Endothelial cell of umbilical vein (primary cell): ENCODE measurements at regions of chr6 and their contacts with region 1.

Region 1: DNA sequence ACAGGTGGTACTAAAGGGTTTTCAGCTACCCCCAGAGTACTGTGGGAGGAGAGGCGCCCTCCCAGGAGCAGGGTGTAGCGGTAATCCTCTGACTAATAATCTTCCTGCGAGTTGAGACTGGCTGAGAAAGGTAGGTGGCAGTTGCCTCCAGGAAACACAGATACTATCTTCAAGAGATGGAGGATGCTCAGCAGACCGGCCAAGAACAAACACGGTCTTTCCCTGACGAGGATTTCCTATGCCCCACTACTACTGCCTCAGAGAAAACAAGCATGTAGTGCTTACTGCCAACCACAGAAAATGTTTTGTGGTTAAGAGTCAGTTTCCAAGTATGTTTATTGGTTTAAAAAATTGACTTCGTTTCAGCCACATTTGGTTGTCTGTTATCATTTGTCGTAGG is 26.8 kb downstream of the C6orf89 start:
- DNase-seq: no peak
- H3K4me3 ChIP-seq: no peak overlapping the region
- H3K27ac ChIP-seq: no peak overlapping the region
- H3K4me1 ChIP-seq: peaks cover 8% of the 10 kb centered on the region
- H3K27me3 ChIP-seq: no peaks in the 10 kb centered on the region
- CTCF ChIP-seq: no peak
- POLR2A ChIP-seq: no peak

Region 2: DNA sequence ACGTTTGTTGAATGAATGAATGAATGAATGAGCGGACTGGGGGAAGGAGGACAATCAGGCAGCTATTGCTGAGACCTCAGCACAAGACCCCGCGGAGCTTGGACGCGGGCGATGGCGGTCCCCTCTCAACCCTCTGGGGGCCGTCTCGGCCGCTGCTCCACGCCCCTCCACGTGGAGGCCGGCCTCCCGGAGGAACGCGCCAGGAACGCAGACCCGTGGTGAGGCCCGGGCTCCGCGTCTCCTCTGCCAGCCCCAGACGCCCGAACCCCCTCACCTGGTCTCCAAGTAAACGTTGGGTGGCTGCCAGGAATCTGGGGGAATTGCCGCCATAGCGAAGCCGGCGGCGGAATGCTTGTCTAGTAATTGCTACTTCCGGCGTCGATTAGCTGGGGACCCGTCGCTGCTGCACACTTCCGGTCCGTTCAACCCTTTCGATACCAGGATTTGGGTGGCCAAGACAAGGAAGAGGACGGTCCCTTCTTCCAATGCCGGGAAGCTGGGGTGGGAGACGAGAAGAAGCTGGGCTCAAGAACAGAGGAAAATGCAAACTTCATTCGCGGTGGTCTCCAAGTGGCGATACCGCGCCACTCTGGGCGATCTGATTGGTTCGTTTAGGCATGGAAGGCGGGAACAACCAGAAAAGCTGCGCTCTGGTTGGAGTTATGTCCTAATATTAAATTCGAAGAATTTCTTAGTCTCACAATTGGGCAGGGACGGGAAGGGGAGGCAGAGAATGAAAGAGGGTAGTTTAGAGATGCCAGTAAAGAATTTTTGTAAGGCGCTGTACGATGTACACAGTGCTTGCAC is 37.9 kb before region 1 on chr6 and contains the start of gene PPIL1:
- CTCF ChIA-PET with region 1: interaction called, 10 read pairs
- POLR2A ChIA-PET with region 1: no interaction called
- dilution Hi-C with region 1: no loop called
- intact Hi-C with region 1: no loop called
- DNase-seq: peak; percentile 93
- H3K4me3 ChIP-seq: peak within 1 kb of the TSS; percentile 63 to 95 (median 67)
- H3K27ac ChIP-seq: peak within 1 kb of the TSS; percentile 82
- H3K4me1 ChIP-seq: peaks cover 12% of the 10 kb centered on the region
- H3K27me3 ChIP-seq: no peaks in the 10 kb centered on the region
- CTCF ChIP-seq: peak in 1 of 2 donors; percentile 2
- POLR2A ChIP-seq: peak; percentile 59
- total RNA-seq, gene PPIL1: 33.8 and 35.6 TPM in 2 replicates

Region 3: DNA sequence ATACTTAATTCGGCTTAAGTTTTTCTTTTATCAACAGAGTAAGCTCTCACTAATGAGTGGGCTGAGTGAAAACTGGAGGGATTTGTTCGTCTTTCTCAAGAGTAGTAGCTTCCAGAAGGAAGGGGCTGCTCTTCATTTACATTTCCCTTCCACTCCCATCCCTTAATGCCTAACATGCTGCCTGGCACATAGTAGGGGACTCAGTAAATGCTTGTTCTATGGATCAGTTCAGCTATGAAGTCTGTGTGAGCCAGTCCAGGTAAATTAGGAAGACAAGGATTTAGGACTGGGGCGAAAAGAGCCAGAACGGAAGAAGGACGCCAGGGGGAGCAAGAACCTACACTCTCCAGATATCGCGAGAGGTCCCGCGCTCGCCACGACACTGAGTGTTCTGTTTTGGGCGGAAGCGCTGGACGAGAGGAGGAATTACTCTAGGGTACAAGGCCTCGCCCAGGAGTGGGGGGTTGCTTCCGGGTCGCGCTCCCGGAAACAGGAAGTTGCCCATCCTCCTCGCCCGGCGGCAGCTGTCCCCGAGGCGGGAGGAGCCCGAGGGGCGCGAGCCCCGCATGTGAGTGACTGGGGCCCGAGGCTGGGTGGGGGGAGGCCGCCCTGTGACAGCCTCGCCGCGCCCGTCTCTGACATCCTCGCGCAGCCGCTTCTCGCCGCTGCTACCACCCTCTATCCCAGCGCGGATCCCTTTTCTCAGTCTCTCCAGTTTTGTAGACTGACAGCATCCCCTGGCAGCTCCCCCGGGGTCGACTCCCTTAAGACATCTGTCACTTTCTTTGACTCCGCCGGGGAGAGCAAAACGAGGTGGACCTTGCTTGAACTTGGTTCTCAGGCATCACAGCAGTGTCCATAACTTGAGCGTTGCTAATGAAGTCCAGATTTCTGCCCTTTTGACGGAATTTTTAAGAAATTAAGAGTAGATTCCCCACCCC is 26.9 kb before region 1 on chr6 and contains the start of gene C6orf89:
- CTCF ChIA-PET with region 1: interaction called, 11 read pairs
- POLR2A ChIA-PET with region 1: no interaction called
- dilution Hi-C with region 1: no loop called
- intact Hi-C with region 1: no loop called
- DNase-seq: peak; percentile 96
- H3K4me3 ChIP-seq: peak within 1 kb of the TSS; percentile 77 to 95 (median 84)
- H3K27ac ChIP-seq: peak within 1 kb of the TSS; percentile 76
- H3K4me1 ChIP-seq: peaks cover 12% of the 10 kb centered on the region
- H3K27me3 ChIP-seq: no peaks in the 10 kb centered on the region
- CTCF ChIP-seq: peak; percentile 78 to 84
- POLR2A ChIP-seq: peak; percentile 89
- total RNA-seq, gene C6orf89: 34.0 and 36.4 TPM in 2 replicates

Region 4: GRCh38 chr6:36927691-36928546 is 15.3 kb after region 1 on chr6:
- CTCF ChIA-PET with region 1: interaction called, 11 read pairs
- POLR2A ChIA-PET with region 1: no interaction called
- dilution Hi-C with region 1: no loop called
- intact Hi-C with region 1: no loop called
- DNase-seq: no peak
- H3K4me3 ChIP-seq: no peak overlapping the region
- H3K27ac ChIP-seq: no peak overlapping the region
- H3K4me1 ChIP-seq: peaks cover 2% of the 10 kb centered on the region
- H3K27me3 ChIP-seq: no peaks in the 10 kb centered on the region
- CTCF ChIP-seq: no peak
- POLR2A ChIP-seq: no peak

Region 5: GRCh38 chr6:36949636-36950035 is 37.0 kb after region 1 on chr6:
- CTCF ChIA-PET with region 1: interaction called, 12 read pairs
- POLR2A ChIA-PET with region 1: no interaction called
- dilution Hi-C with region 1: no loop called
- intact Hi-C with region 1: loop called (anchors 1 kb)
- DNase-seq: peak; percentile 88
- H3K4me3 ChIP-seq: no peak overlapping the region
- H3K27ac ChIP-seq: peak overlapping the region; percentile 96
- H3K4me1 ChIP-seq: peaks cover 13% of the 10 kb centered on the region
- H3K27me3 ChIP-seq: no peaks in the 10 kb centered on the region
- CTCF ChIP-seq: no peak
- POLR2A ChIP-seq: no peak

Region 6: DNA sequence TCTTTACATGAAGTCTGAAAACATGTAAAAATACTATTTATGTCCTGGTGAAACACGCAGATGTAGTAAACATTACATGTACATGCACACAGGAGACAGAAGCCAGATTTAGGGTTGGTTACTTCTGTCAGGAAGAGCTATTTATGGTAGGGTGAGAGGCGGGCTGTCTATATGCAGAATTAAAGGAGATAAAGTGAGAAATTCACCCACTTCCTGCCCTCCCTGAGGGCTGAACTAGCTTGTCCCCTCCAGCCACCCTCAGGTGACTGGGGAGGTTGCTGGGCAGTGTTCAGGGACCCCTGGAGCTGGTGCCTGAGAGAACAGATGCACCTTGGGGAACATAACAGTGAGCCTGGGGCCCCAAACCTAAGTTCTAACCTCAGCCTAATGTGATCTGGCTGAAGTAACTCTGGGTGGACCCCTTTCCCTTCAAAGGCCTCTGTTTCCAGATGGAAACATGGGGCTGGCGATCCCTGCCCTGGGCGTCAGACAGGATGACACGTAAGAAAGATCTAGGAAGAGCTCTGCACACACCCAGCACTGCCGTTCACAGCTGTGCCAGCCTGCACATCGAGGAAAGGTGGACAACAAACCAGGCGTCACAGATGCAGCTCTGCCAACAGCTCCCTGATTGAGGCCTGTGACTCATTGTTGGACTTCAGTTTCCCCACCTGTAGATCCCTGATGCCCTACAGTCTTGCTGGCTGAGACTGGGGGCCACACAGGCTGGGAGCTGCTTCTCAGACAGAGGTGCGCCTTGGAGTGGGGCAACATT is 43.3 kb after region 1 on chr6:
- CTCF ChIA-PET with region 1: interaction called, 12 read pairs
- POLR2A ChIA-PET with region 1: no interaction called
- dilution Hi-C with region 1: no loop called
- intact Hi-C with region 1: no loop called
- DNase-seq: peak; percentile 29
- H3K4me3 ChIP-seq: no peak overlapping the region
- H3K27ac ChIP-seq: no peak overlapping the region
- H3K4me1 ChIP-seq: peaks cover 3% of the 10 kb centered on the region
- H3K27me3 ChIP-seq: no peaks in the 10 kb centered on the region
- CTCF ChIP-seq: no peak
- POLR2A ChIP-seq: no peak

Region 7: GRCh38 chr6:37029249-37029971 is 116.8 kb after region 1 on chr6:
- CTCF ChIA-PET with region 1: no interaction called
- POLR2A ChIA-PET with region 1: no interaction called
- dilution Hi-C with region 1: no loop called
- intact Hi-C with region 1: no loop called
- DNase-seq: peak; percentile 77
- H3K4me3 ChIP-seq: no peak overlapping the region
- H3K27ac ChIP-seq: no peak overlapping the region
- H3K4me1 ChIP-seq: no peaks in the 10 kb centered on the region
- H3K27me3 ChIP-seq: peaks cover 0 to 3% of the 10 kb centered on the region in 2 experiments
- CTCF ChIP-seq: peak; percentile 70 to 79
- POLR2A ChIP-seq: no peak